ENCODE measurements at regions of chr5 and their contacts with region 1.

Region 1: GRCh38 chr5:15003511-15003920 is 131.9 kb upstream of the ANKH start:
- DNase-seq: no peak
- H3K4me3 ChIP-seq: no peak overlapping the region
- H3K27ac ChIP-seq: no peak overlapping the region
- H3K4me1 ChIP-seq: peaks cover 15% of the 10 kb centered on the region
- H3K27me3 ChIP-seq: no peaks in the 10 kb centered on the region
- CTCF ChIP-seq: peak; percentile 40 to 69 (median 64)
- POLR2A ChIP-seq: no peak

Region 2: GRCh38 chr5:14727428-14727865 is 276.1 kb before region 1 on chr5:
- intact Hi-C with region 1: loop called (anchors 5 kb)
- DNase-seq: no peak
- H3K4me3 ChIP-seq: no peak overlapping the region
- H3K27ac ChIP-seq: no peak overlapping the region
- H3K4me1 ChIP-seq: no peaks in the 10 kb centered on the region
- H3K27me3 ChIP-seq: no peaks in the 10 kb centered on the region
- CTCF ChIP-seq: peak; percentile 89 to 96 (median 92)
- POLR2A ChIP-seq: no peak

Region 3: GRCh38 chr5:16245249-16245648 is 1241.7 kb after region 1 on chr5:
- intact Hi-C with region 1: no loop called
- DNase-seq: no peak
- H3K4me3 ChIP-seq: no peak overlapping the region
- H3K27ac ChIP-seq: no peak overlapping the region
- H3K4me1 ChIP-seq: no peaks in the 10 kb centered on the region
- H3K27me3 ChIP-seq: no peaks in the 10 kb centered on the region
- CTCF ChIP-seq: no peak
- POLR2A ChIP-seq: no peak

Measured in vagina (tissue), 2 donors.